GM23248 (cell line): ENCODE measurements at regions of chr3 and their contacts with region 1.

Region 1: DNA sequence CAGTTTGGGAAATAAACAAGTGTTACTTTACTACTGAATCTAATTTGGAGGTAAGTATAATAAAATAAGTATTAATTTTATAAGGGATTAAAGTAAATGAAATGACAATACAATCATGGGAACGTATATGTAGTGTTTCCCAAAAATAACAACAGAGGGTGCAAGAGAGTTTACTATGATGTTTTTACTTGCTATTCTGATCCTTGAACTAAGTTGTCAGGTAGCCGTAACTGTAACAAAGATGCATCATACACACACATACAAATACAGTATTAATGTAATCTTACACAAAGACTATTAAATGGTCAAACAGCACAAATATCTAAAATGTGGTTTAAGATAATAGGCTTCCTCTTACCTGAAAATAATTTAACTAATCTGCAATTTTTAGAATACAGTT is 311.4 kb downstream of the TBC1D5 start:
- DNase-seq: peak; percentile 56
- H3K4me3 ChIP-seq: no peak overlapping the region
- H3K27ac ChIP-seq: no peak overlapping the region
- H3K4me1 ChIP-seq: peaks cover 19% of the 10 kb centered on the region
- H3K27me3 ChIP-seq: no peaks in the 10 kb centered on the region

Region 2: DNA sequence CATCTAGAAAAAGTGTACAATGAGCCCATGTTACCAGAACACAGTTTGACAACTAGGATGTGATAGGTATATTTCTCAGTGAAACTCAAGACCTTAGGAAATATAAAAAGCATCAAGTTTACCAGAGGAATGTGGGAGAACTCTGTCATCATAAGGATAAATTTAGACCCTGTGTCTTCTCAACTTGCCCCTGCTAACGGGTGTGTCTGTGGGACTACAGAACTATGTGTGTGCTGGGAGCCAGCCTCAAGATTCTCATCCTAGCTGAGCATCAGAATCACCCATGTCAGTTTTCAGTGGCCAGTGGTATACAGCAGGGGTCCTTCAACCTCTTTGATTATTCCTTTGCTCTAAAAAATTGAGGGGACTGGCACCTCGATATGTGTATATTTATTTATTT is 153.0 kb before region 1 on chr3:
- in situ Hi-C with region 1: no loop called
- DNase-seq: no peak
- H3K4me3 ChIP-seq: no peak overlapping the region
- H3K27ac ChIP-seq: no peak overlapping the region
- H3K4me1 ChIP-seq: no peaks in the 10 kb centered on the region
- H3K27me3 ChIP-seq: no peaks in the 10 kb centered on the region

Region 3: DNA sequence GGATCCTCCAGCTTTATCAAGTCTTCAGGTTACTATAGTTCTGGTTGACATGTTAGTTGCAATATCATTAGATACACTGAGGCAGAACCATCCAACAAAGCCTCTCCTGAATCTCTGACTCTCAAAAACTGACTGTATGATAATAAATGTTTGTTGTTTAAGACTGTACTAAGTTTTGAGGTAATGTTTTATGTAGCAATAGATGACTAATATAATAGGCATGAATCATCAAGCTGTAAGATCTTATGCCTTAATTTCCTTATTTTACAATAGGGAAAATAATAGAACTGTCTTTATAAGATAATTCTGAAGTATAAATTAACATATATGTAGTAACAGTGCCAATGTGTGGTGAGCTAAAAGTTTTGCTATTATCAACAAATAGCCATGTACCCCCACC is 400.4 kb after region 1 on chr3:
- in situ Hi-C with region 1: loop called (anchors 10 kb)
- DNase-seq: peak; percentile 65
- H3K4me3 ChIP-seq: no peak overlapping the region
- H3K27ac ChIP-seq: peak overlapping the region; percentile 9; the same call in 1 of the 2 replicates
- H3K4me1 ChIP-seq: peaks cover 20% of the 10 kb centered on the region
- H3K27me3 ChIP-seq: no peaks in the 10 kb centered on the region